ENCODE measurements at regions of chr6 and their contacts with region 1.

Region 1: DNA sequence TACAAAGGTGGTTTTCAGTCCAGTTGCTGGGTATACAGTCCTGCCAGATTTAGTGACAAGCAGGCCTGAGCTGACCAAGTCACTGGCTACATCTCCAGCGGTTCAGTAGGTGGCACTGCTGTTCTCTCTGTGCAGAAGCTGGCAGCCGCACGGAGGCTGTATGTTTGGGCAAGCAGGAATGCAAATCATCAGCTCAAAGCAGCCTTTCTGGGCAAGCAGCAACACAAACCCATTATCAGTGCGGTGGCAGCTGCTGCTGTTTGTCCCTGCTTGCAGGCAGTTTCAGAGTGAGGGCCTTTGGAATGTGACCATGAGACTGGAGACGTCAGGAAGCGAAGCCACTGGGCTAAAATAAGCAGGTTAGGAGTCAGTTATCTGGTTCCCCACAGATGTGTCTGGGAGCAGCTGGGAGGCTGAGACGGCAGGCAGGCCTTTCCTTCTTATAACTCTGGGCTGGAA is 72.5 kb downstream of the TXLNB start:
- DNase-seq: peak; percentile 83
- ATAC-seq: peak; percentile 100
- H3K4me3 ChIP-seq: no peak overlapping the region
- H3K4me3 Mint-ChIP-seq: peak overlapping the region; percentile 40
- H3K27ac ChIP-seq: no peak overlapping the region
- H3K27ac Mint-ChIP-seq: peak overlapping the region; percentile 79
- H3K4me1 ChIP-seq: peaks cover 4 to 8% of the 10 kb centered on the region in 2 donors
- H3K4me1 Mint-ChIP-seq: peaks cover 13% of the 10 kb centered on the region
- H3K27me3 ChIP-seq: no peaks in the 10 kb centered on the region
- H3K27me3 Mint-ChIP-seq: no peaks in the 10 kb centered on the region
- CTCF ChIP-seq: peak; percentile 84

Region 2: DNA sequence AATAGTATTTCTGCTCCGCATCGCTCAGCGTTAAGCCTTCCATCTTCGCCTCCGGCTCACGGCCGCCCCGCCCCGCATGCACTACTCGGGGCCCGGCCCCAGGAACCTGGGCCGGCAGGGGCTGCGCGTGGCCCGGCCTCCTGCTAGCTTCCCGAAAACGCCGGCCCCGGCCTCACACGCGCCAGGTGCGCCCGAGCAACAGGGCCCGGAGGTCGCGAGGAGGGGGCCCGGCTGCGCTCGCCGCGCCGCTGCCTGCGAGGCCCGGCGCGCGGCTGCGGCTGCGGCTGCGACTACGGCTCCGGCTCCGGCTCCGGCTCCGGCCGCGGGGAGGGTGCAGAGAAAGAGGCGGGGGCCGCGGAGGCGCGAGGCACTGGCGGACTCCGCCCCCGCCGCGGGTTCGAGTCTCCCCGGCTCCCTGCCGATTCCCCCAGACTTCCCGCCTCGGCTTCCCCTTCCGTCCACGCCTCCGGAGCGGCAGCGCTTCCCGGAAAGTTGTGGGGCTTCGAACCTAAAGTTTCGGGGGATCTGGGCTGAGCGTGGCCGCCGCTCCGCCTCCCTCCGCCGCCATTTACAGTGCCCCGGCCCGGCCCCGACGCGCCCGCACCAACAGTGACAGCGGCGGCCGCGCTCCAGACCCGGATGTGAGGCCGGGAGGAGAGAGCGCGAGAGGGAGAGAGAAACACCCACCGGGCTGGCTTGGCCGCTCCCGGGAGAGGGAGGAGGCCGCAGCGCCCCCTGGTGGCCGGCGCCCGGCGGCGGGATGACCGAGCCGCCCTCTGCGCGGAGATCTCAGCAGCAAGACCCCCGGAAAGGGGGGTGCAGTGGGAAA is 231.4 kb before region 1 on chr6 and contains the start of gene REPS1:
- CTCF ChIA-PET with region 1: interaction called, 7 read pairs
- POLR2A ChIA-PET with region 1: no interaction called
- intact Hi-C with region 1: loop called (anchors 2 kb)
- DNase-seq: peak; percentile 91
- ATAC-seq: peak; percentile 91
- H3K4me3 ChIP-seq: peak within 1 kb of the TSS; percentile 52 to 97 (median 87)
- H3K4me3 Mint-ChIP-seq: peak within 1 kb of the TSS; percentile 87
- H3K27ac ChIP-seq: peak within 1 kb of the TSS; percentile 78 to 90
- H3K27ac Mint-ChIP-seq: peak within 1 kb of the TSS; percentile 95
- H3K4me1 ChIP-seq: peaks cover 23 to 26% of the 10 kb centered on the region in 2 donors
- H3K4me1 Mint-ChIP-seq: peaks cover 21% of the 10 kb centered on the region
- H3K27me3 ChIP-seq: no peaks in the 10 kb centered on the region
- H3K27me3 Mint-ChIP-seq: no peaks in the 10 kb centered on the region
- CTCF ChIP-seq: peak; percentile 98
- total RNA-seq, gene REPS1: 55.5 and 57.1 TPM in 2 replicates

Region 3: GRCh38 chr6:139134817-139135581 is 84.3 kb before region 1 on chr6 and contains the start of gene HECA:
- CTCF ChIA-PET with region 1: interaction called, 31 read pairs
- POLR2A ChIA-PET with region 1: no interaction called
- intact Hi-C with region 1: loop called (anchors 1 kb)
- DNase-seq: peak; percentile 98
- ATAC-seq: peak; percentile 73
- H3K4me3 ChIP-seq: peak within 1 kb of the TSS; percentile 67 to 93 (median 87)
- H3K4me3 Mint-ChIP-seq: peak within 1 kb of the TSS; percentile 97
- H3K27ac ChIP-seq: peak within 1 kb of the TSS; percentile 88 to 94
- H3K27ac Mint-ChIP-seq: peak within 1 kb of the TSS; percentile 98
- H3K4me1 ChIP-seq: peaks cover 68 to 73% of the 10 kb centered on the region in 2 donors
- H3K4me1 Mint-ChIP-seq: peaks cover 71% of the 10 kb centered on the region
- H3K27me3 ChIP-seq: no peaks in the 10 kb centered on the region
- H3K27me3 Mint-ChIP-seq: no peaks in the 10 kb centered on the region
- CTCF ChIP-seq: no peak
- total RNA-seq, gene HECA: 50.4 and 53.0 TPM in 2 replicates

Region 4: DNA sequence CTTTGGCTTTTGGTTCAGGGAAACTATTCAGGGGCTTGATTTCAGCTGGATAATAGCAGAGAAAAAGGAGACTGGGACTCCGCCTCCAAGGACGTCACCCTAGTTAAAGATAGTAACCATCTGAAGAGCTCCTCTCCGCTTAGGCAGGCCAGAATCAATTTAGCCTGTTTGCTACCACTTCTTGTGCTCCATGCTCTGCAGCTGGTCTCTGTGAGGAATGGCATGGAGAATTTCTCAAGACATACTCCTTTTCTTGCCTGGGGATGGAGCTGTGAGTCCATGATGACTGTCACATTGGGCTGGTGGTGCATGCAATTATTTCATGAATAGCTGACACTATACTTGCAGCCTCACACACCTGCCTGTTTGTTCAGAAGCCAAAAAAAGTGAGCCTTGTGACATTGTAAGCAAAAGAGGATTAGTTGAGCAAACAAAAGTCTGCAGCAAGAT is 11.1 kb after region 1 on chr6:
- CTCF ChIA-PET with region 1: interaction called, 23 read pairs
- POLR2A ChIA-PET with region 1: no interaction called
- intact Hi-C with region 1: no loop called
- DNase-seq: no peak
- ATAC-seq: no peak
- H3K4me3 ChIP-seq: no peak overlapping the region
- H3K4me3 Mint-ChIP-seq: no peak overlapping the region
- H3K27ac ChIP-seq: no peak overlapping the region
- H3K27ac Mint-ChIP-seq: no peak overlapping the region
- H3K4me1 ChIP-seq: no peaks in the 10 kb centered on the region
- H3K4me1 Mint-ChIP-seq: peaks cover 4% of the 10 kb centered on the region
- H3K27me3 ChIP-seq: no peaks in the 10 kb centered on the region
- H3K27me3 Mint-ChIP-seq: no peaks in the 10 kb centered on the region
- CTCF ChIP-seq: no peak

Region 5: DNA sequence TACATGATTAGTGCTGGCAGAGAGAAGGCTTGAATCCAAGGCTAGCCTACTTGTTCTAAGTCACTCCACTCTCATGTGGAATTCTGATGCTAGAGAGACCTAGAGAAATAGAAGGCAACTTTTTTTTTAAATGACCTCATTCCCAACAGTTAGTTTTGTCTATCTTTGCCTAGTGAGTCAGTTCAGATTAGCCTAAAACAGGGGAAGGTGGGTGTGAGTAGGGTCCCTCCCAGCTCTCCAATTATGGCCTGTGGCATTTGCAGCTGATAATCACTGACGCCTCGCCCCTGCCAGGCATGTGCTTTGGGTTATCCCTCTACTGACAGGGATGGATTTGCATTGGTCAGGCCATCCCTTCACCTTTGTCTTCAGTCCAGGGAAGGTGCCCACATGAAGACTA is 58.9 kb after region 1 on chr6:
- CTCF ChIA-PET with region 1: interaction called, 10 read pairs
- POLR2A ChIA-PET with region 1: no interaction called
- intact Hi-C with region 1: no loop called
- DNase-seq: no peak
- ATAC-seq: no peak
- H3K4me3 ChIP-seq: no peak overlapping the region
- H3K4me3 Mint-ChIP-seq: peak overlapping the region; percentile 30
- H3K27ac ChIP-seq: peak overlapping the region; percentile 36 to 79
- H3K27ac Mint-ChIP-seq: peak overlapping the region; percentile 96
- H3K4me1 ChIP-seq: peaks cover 36 to 39% of the 10 kb centered on the region in 2 donors
- H3K4me1 Mint-ChIP-seq: peaks cover 69% of the 10 kb centered on the region
- H3K27me3 ChIP-seq: no peaks in the 10 kb centered on the region
- H3K27me3 Mint-ChIP-seq: no peaks in the 10 kb centered on the region
- CTCF ChIP-seq: no peak

Region 6: DNA sequence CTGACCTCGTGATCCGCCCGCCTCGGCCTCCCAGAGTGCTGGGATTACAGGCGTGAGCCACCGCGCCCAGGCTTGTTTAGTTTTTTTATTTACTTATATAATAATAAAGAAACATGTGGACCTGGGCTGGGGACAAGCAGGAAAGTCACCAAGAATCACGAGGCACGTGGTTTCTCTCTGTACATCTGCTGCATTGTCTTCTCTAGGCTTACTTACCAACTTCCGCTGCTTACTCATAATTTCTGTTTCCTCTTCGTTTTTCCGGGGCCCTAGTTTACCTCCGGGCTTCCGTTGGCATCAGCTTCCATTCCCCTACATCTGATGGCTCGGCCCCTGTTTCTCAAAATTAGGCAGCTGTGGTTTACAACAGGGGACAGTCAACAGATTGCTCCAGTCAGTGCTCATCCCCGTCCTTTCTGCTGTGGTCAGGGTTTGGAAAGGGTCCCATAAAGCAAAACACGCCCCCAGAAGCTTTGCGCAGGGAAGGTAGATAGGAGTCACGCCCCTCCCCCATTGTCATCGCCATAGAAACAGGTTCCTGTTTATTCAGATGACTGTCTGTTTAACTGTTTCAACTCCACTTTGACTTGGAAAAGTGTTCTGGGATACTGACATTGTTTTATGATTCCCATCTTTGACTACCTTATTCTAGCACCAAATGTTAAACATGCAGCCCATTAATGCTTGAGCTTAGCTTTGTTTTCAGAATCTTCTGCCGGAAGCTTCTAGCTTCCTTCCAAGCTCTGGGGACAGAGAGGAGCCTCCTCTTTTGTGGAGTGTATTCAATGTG is 104.4 kb after region 1 on chr6:
- CTCF ChIA-PET with region 1: interaction called, 14 read pairs
- POLR2A ChIA-PET with region 1: no interaction called
- intact Hi-C with region 1: no loop called
- DNase-seq: peak; percentile 88
- ATAC-seq: peak; percentile 74
- H3K4me3 ChIP-seq: peak overlapping the region; percentile 56 to 81 (median 67)
- H3K4me3 Mint-ChIP-seq: peak overlapping the region; percentile 92
- H3K27ac ChIP-seq: peak overlapping the region; percentile 83 to 92
- H3K27ac Mint-ChIP-seq: peak overlapping the region; percentile 98
- H3K4me1 ChIP-seq: peaks cover 30 to 42% of the 10 kb centered on the region in 2 donors
- H3K4me1 Mint-ChIP-seq: peaks cover 37% of the 10 kb centered on the region
- H3K27me3 ChIP-seq: no peaks in the 10 kb centered on the region
- H3K27me3 Mint-ChIP-seq: no peaks in the 10 kb centered on the region
- CTCF ChIP-seq: no peak

Region 7: GRCh38 chr6:139375232-139376016 is 156.1 kb after region 1 on chr6:
- CTCF ChIA-PET with region 1: interaction called, 111 read pairs
- POLR2A ChIA-PET with region 1: interaction called, 5 read pairs
- intact Hi-C with region 1: no loop called
- DNase-seq: peak; percentile 91
- ATAC-seq: peak; percentile 53
- H3K4me3 ChIP-seq: peak overlapping the region; percentile 91 to 99 (median 97)
- H3K4me3 Mint-ChIP-seq: peak overlapping the region; percentile 100
- H3K27ac ChIP-seq: peak overlapping the region; percentile 73 to 81
- H3K27ac Mint-ChIP-seq: peak overlapping the region; percentile 100
- H3K4me1 ChIP-seq: peaks cover 9 to 17% of the 10 kb centered on the region in 2 donors
- H3K4me1 Mint-ChIP-seq: peaks cover 23% of the 10 kb centered on the region
- H3K27me3 ChIP-seq: no peaks in the 10 kb centered on the region
- H3K27me3 Mint-ChIP-seq: no peaks in the 10 kb centered on the region
- CTCF ChIP-seq: no peak

Measured in B cell (primary cell).